ENCODE measurements at regions of chr5 and their contacts with region 1.

Region 1: GRCh38 chr5:157900644-157901043 is 41.7 kb upstream of the CLINT1 start:
- DNase-seq: no peak
- ATAC-seq: no peak
- H3K4me3 ChIP-seq: no peak overlapping the region
- H3K27ac ChIP-seq: no peak overlapping the region
- H3K4me1 ChIP-seq: no peaks in the 10 kb centered on the region
- H3K27me3 ChIP-seq: no peaks in the 10 kb centered on the region
- CTCF ChIP-seq: no peak

Region 2: DNA sequence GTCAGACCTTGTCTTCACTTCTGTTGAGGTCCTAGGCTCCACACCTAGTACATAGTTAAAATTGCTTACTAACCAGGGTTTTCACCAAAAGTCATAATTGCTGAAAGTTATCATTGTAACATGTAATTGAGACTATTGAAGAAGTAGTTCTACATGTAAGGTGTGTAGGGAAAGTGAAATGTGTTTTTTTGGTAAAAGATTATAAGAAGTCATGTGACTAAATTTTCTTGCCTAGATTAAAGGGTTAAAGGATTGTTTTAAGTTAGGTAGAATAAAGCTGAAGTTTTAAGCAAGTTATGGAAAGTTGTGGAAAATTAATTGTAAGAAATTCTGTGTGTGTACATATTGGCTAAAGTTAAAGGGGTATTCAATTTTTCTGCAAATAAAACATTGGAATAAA is 203.2 kb before region 1 on chr5:
- CTCF ChIA-PET with region 1: interaction called, 10 read pairs
- POLR2A ChIA-PET with region 1: no interaction called
- in situ Hi-C with region 1: no loop called
- intact Hi-C with region 1: no loop called
- DNase-seq: no peak
- ATAC-seq: no peak
- H3K4me3 ChIP-seq: no peak overlapping the region
- H3K27ac ChIP-seq: no peak overlapping the region
- H3K4me1 ChIP-seq: no peaks in the 10 kb centered on the region
- H3K27me3 ChIP-seq: no peaks in the 10 kb centered on the region
- CTCF ChIP-seq: no peak

Measured in Panc1 (cell line).